HCT116 (cell line): ENCODE measurements at regions of chr22 and their contacts with region 1.

Region 1: GRCh38 chr22:43090130-43090789 is 1.1 kb upstream of the TTLL1 start:
- DNase-seq: peak; percentile 90
- ATAC-seq: peak; percentile 55
- H3K4me3 ChIP-seq: peak overlapping the region; percentile 69 to 93
- H3K27ac ChIP-seq: peak overlapping the region; percentile 68; the same call in 1 of the 2 replicates
- H3K4me1 ChIP-seq: peaks cover 10 to 29% of the 10 kb centered on the region in 2 experiments; a peak in 3 of 4 replicates
- H3K27me3 ChIP-seq: no peaks in the 10 kb centered on the region
- CTCF ChIP-seq: peak; percentile 59 to 88 (median 68); a peak in 5 of 6 replicates
- POLR2A ChIP-seq: no peak
- RAD21 ChIP-seq: peak; percentile 95

Region 2: GRCh38 chr22:42614312-42615091 is 475.8 kb before region 1 on chr22 and contains the start of gene POLDIP3:
- CTCF ChIA-PET with region 1: no interaction called
- POLR2A ChIA-PET with region 1: interaction called, 13 read pairs
- RAD21 ChIA-PET with region 1: no interaction called
- intact Hi-C with region 1: no loop called
- DNase-seq: peak; percentile 96
- ATAC-seq: peak; percentile 71
- H3K4me3 ChIP-seq: peak within 1 kb of the TSS; percentile 98
- H3K27ac ChIP-seq: peak within 1 kb of the TSS; percentile 89
- H3K4me1 ChIP-seq: peaks cover 18 to 50% of the 10 kb centered on the region in 2 experiments
- H3K27me3 ChIP-seq: no peaks in the 10 kb centered on the region
- CTCF ChIP-seq: peak in 1 of 3 experiments; percentile 26; a peak in 2 of 6 replicates
- POLR2A ChIP-seq: no peak
- RAD21 ChIP-seq: no peak
- total RNA-seq, gene POLDIP3: 67.6 TPM

Region 3: GRCh38 chr22:42662114-42663021 is 427.9 kb before region 1 on chr22:
- CTCF ChIA-PET with region 1: interaction called, 3 read pairs
- POLR2A ChIA-PET with region 1: no interaction called
- RAD21 ChIA-PET with region 1: no interaction called
- intact Hi-C with region 1: loop called (anchors 5 kb)
- DNase-seq: no peak
- ATAC-seq: peak; percentile 90
- H3K4me3 ChIP-seq: peak overlapping the region; percentile 42 to 55
- H3K27ac ChIP-seq: no peak overlapping the region; the same call in 1 of the 2 replicates
- H3K4me1 ChIP-seq: peaks cover 0 to 4% of the 10 kb centered on the region in 2 experiments; a peak in 1 of 4 replicates
- H3K27me3 ChIP-seq: no peaks in the 10 kb centered on the region
- CTCF ChIP-seq: peak; percentile 72 to 82 (median 73); a peak in 5 of 6 replicates
- POLR2A ChIP-seq: peak; percentile 14
- RAD21 ChIP-seq: peak; percentile 79

Region 4: GRCh38 chr22:42863349-42863961 is 226.8 kb before region 1 on chr22:
- CTCF ChIA-PET with region 1: interaction called, 12 read pairs
- POLR2A ChIA-PET with region 1: no interaction called
- RAD21 ChIA-PET with region 1: interaction called in 1 of 2 experiments, 4 read pairs
- intact Hi-C with region 1: loop called (anchors 1 kb)
- DNase-seq: peak; percentile 43
- ATAC-seq: no peak
- H3K4me3 ChIP-seq: peak overlapping the region in 1 of 2 experiments; percentile 13; a peak in 2 of 4 replicates
- H3K27ac ChIP-seq: peak overlapping the region; percentile 38; the same call in 1 of the 2 replicates
- H3K4me1 ChIP-seq: peaks cover 17 to 35% of the 10 kb centered on the region in 2 experiments
- H3K27me3 ChIP-seq: no peaks in the 10 kb centered on the region
- CTCF ChIP-seq: no peak
- POLR2A ChIP-seq: no peak
- RAD21 ChIP-seq: no peak

Region 5: DNA sequence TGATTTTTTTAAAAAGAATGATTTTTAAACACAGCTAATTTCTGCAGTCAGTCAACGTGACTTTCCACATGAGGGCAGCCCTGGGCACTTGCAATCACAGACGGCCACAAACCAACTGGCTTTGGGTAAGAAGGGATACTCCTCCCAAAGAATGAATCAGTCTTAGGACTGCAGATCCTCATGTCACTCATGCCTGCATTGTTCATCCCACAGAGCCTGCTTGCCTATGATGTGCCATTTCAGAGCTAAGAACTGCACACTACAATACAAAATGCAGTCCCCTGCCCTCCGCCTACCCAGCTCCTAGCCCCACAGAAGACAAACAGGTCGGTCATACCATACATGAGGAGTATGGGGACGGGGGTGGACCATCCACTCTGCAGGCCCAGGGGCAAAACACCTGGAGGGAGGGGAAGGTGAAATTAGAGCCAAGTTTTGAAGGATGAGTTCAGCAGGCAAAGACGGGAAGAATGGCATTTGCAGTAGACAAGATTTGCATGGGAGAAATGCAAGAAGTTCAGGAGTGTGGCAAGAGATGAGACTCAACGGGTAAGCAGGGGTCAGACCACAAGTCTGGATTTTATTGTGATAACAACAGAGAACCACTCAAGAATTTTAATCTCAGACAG is 100.0 kb before region 1 on chr22:
- CTCF ChIA-PET with region 1: interaction called, 4 read pairs
- POLR2A ChIA-PET with region 1: no interaction called
- RAD21 ChIA-PET with region 1: no interaction called
- intact Hi-C with region 1: loop called (anchors 1 kb)
- DNase-seq: no peak
- ATAC-seq: peak; percentile 81
- H3K4me3 ChIP-seq: no peak overlapping the region
- H3K27ac ChIP-seq: no peak overlapping the region
- H3K4me1 ChIP-seq: peaks cover 13 to 25% of the 10 kb centered on the region in 2 experiments
- H3K27me3 ChIP-seq: no peaks in the 10 kb centered on the region
- CTCF ChIP-seq: peak; percentile 30 to 33 (median 33); a peak in 4 of 6 replicates
- POLR2A ChIP-seq: no peak
- RAD21 ChIP-seq: peak; percentile 60

Region 6: DNA sequence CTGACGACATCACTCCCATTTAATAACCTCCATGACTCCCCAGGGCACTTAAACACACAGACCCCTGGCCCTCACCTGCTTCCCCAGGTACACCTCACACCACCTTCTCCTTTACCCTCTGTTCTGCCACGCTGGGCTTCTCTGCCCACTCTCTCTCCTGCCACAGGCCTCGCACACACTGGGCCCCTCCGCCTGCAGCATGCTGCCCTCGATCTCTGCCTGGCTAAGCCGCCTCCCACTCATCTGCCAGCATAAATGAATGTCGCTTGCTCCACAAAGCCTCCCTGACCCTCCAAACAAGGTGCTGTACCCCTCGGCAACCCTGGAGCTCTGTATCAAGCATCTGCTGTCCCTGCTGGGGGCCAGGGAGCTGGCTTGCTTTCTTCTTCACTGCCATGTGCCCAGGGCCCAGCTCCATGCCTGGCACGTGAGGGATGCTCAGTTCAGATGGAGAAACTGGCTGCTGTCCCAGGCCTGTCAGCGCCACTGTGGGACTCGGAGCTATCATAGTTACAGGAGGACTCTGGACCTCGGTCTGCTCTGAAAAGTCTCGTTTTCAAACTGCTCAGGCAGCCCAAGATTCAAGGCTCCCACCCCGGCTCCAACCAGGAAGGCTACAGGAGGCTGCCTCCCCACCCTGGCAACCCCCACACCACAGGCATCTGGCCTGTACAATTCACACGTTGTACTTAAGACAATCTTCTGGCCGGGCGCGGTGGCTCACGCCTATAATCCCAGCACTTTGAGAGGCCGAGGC is 13.0 kb before region 1 on chr22:
- CTCF ChIA-PET with region 1: no interaction called
- POLR2A ChIA-PET with region 1: no interaction called
- RAD21 ChIA-PET with region 1: no interaction called
- intact Hi-C with region 1: no loop called
- DNase-seq: no peak
- ATAC-seq: no peak
- H3K4me3 ChIP-seq: no peak overlapping the region
- H3K27ac ChIP-seq: no peak overlapping the region
- H3K4me1 ChIP-seq: peaks cover 13 to 26% of the 10 kb centered on the region in 2 experiments
- H3K27me3 ChIP-seq: no peaks in the 10 kb centered on the region
- CTCF ChIP-seq: no peak
- POLR2A ChIP-seq: no peak
- RAD21 ChIP-seq: no peak

Region 7: GRCh38 chr22:43213051-43213450 is 122.8 kb after region 1 on chr22:
- CTCF ChIA-PET with region 1: no interaction called
- POLR2A ChIA-PET with region 1: no interaction called
- RAD21 ChIA-PET with region 1: no interaction called
- intact Hi-C with region 1: no loop called
- DNase-seq: no peak
- ATAC-seq: peak; percentile 92
- H3K4me3 ChIP-seq: no peak overlapping the region
- H3K27ac ChIP-seq: no peak overlapping the region
- H3K4me1 ChIP-seq: peaks cover 4 to 7% of the 10 kb centered on the region in 2 experiments; a peak in 3 of 4 replicates
- H3K27me3 ChIP-seq: no peaks in the 10 kb centered on the region
- CTCF ChIP-seq: no peak
- POLR2A ChIP-seq: no peak
- RAD21 ChIP-seq: no peak